ENCODE measurements at regions of chr17 and their contacts with region 1.

Region 1: GRCh38 chr17:74354123-74354522 is 7.5 kb downstream of the BTBD17 start:
- DNase-seq: peak; percentile 45 to 69
- ATAC-seq: peak; percentile 54 to 78 (median 71)
- H3K4me3 ChIP-seq: no peak overlapping the region
- H3K4me3 Mint-ChIP-seq: peak overlapping the region; percentile 45
- H3K27ac ChIP-seq: no peak overlapping the region
- H3K27ac Mint-ChIP-seq: no peak overlapping the region
- H3K4me1 ChIP-seq: peaks cover 8% of the 10 kb centered on the region
- H3K4me1 Mint-ChIP-seq: peaks cover 0 to 7% of the 10 kb centered on the region in 2 donors
- H3K27me3 ChIP-seq: peaks cover 47% of the 10 kb centered on the region
- H3K27me3 Mint-ChIP-seq: peaks cover 27 to 42% of the 10 kb centered on the region in 2 donors
- CTCF ChIP-seq: peak; percentile 59

Region 2: DNA sequence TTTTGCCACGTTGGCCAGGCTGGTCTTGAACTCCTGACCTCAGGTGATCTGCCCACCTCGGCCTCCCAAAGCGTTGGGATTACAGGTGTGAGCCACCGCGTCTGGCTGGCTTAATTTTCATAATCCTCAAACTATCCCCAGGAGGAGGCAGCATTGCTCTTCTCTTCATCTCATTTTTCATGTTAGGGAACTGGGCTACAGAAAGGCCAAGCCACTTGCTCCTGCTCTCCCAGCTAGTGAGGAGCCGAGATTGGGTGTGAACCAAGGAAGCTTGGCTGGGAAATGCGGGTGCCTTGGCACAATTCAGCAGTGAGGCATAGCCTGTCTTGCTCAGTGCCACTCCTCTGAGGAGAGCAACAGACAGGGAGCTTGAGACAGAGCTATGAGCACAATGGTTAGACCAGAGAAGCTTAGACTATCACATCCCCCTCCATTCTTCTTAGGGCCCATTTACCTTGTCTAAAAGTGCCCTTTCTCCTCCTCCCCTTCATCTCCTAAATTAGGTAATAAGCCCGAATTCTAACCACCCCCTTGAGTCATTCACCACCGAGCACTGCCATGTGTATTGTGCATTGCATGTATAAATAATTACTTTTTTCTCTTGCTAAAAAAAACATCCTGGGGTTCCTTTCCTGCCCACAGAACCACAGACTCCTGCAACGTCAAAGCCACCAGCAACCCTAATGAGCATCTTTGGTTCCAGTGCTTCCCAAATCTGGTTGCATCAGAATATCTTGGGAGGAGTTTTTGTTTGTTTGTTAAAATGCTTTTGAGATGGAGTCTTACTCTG is 48.1 kb before region 1 on chr17:
- intact Hi-C with region 1: loop called (anchors 10 kb)
- DNase-seq: no peak
- ATAC-seq: no peak
- H3K4me3 ChIP-seq: no peak overlapping the region
- H3K4me3 Mint-ChIP-seq: no peak overlapping the region
- H3K27ac ChIP-seq: no peak overlapping the region
- H3K27ac Mint-ChIP-seq: no peak overlapping the region
- H3K4me1 ChIP-seq: peaks cover 8% of the 10 kb centered on the region
- H3K4me1 Mint-ChIP-seq: peaks cover 6 to 11% of the 10 kb centered on the region in 2 donors
- H3K27me3 ChIP-seq: no peaks in the 10 kb centered on the region
- H3K27me3 Mint-ChIP-seq: no peaks in the 10 kb centered on the region
- CTCF ChIP-seq: no peak

Measured in natural killer cell (primary cell).